Panc1 (cell line): ENCODE measurements at regions of chr11 and their contacts with region 1.

Region 1: DNA sequence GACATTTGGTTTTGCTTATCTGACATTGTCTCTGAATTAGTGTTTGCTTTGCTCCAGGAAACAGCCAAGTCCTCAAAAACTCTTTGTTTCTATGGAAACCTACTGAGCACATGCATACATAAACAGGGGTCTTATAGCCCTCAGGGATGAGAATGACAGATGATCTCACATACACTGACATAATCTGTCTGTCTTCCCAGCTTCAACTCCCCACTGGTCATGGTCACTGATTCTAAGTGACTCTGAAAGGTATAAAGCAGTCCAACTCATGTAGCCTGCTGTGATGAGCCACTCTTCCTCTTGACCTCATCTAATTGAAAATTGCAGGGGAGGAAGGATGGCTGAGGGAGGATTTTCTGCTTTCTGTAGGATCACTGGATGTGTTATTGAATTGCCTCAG is 12.6 kb downstream of the ZNF143 start:
- DNase-seq: no peak
- ATAC-seq: no peak
- H3K4me3 ChIP-seq: no peak overlapping the region
- H3K27ac ChIP-seq: no peak overlapping the region
- H3K4me1 ChIP-seq: no peaks in the 10 kb centered on the region
- H3K27me3 ChIP-seq: no peaks in the 10 kb centered on the region
- CTCF ChIP-seq: no peak

Region 2: GRCh38 chr11:9025101-9025850 is 448.1 kb before region 1 on chr11:
- CTCF ChIA-PET with region 1: interaction called, 12 read pairs
- POLR2A ChIA-PET with region 1: no interaction called
- in situ Hi-C with region 1: no loop called
- intact Hi-C with region 1: no loop called
- DNase-seq: no peak
- ATAC-seq: no peak
- H3K4me3 ChIP-seq: no peak overlapping the region
- H3K27ac ChIP-seq: no peak overlapping the region
- H3K4me1 ChIP-seq: no peaks in the 10 kb centered on the region
- H3K27me3 ChIP-seq: no peaks in the 10 kb centered on the region
- CTCF ChIP-seq: no peak